ENCODE measurements at regions of chr3 and their contacts with region 1.

Region 1: GRCh38 chr3:123652346-123652984 is 67.6 kb upstream of the HACD2 start:
- DNase-seq: peak; percentile 79
- H3K27ac ChIP-seq: peak overlapping the region; percentile 71
- CTCF ChIP-seq: peak; percentile 94

Region 2: DNA sequence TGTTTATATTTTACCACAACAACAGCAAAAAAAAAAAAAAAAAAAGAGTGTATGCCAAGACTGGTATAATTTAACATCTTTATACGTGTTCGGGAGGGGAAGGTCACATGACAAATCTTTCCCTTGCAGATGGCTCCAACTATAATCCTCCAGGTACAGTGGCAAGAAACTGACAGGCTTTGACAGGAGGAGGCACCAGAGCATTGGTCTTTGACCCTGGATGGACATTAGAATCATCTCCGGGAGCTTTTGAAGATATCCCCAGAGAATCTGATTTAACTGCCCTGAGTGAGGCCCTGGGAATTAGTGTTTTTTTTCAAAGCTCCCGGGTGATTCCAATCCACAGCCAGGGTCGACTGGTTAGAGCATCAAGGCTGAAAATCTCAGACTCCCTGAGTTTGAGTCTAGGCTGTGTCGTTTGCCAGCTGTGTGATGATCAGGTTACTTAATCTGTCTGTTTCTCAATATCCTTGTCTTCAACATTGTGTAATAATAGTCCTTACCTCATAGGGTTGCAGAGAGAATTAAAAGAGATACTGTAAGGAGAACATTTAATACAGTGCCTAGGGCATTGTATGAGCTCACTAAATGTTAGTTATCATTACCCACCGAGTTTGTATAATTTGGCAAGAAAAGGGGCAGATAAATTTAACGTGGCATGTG is 616.0 kb before region 1 on chr3:
- CTCF ChIA-PET with region 1: no interaction called
- POLR2A ChIA-PET with region 1: no interaction called
- DNase-seq: peak; percentile 58
- H3K27ac ChIP-seq: no peak overlapping the region
- CTCF ChIP-seq: no peak

Region 3: GRCh38 chr3:123678108-123678511 is 25.6 kb after region 1 on chr3:
- CTCF ChIA-PET with region 1: interaction called, 10 read pairs
- POLR2A ChIA-PET with region 1: no interaction called
- DNase-seq: peak; percentile 44
- H3K27ac ChIP-seq: no peak overlapping the region
- CTCF ChIP-seq: no peak

Region 4: GRCh38 chr3:123700791-123701722 is 48.6 kb after region 1 on chr3:
- CTCF ChIA-PET with region 1: interaction called, 24 read pairs
- POLR2A ChIA-PET with region 1: no interaction called
- DNase-seq: no peak
- H3K27ac ChIP-seq: no peak overlapping the region
- CTCF ChIP-seq: no peak

Region 5: GRCh38 chr3:123716411-123716810 is 63.9 kb after region 1 on chr3:
- CTCF ChIA-PET with region 1: interaction called, 10 read pairs
- POLR2A ChIA-PET with region 1: no interaction called
- DNase-seq: no peak
- H3K27ac ChIP-seq: no peak overlapping the region
- CTCF ChIP-seq: no peak

Region 6: GRCh38 chr3:123723522-123724168 is 71.2 kb after region 1 on chr3:
- CTCF ChIA-PET with region 1: interaction called, 29 read pairs
- POLR2A ChIA-PET with region 1: no interaction called
- DNase-seq: peak; percentile 76
- H3K27ac ChIP-seq: no peak overlapping the region
- CTCF ChIP-seq: peak; percentile 88